IMR-90 (cell line): ENCODE measurements at regions of chr14 and their contacts with region 1.

Region 1: GRCh38 chr14:43166163-43166562 is 1340.9 kb downstream of the FSCB start:
- DNase-seq: no peak
- ATAC-seq: no peak
- H3K4me3 ChIP-seq: no peak overlapping the region
- H3K27ac ChIP-seq: no peak overlapping the region
- H3K4me1 ChIP-seq: no peaks in the 10 kb centered on the region
- H3K27me3 ChIP-seq: no peaks in the 10 kb centered on the region
- CTCF ChIP-seq: no peak
- POLR2A ChIP-seq: no peak
- RAD21 ChIP-seq: no peak

Region 2: GRCh38 chr14:43135877-43136411 is 30.2 kb before region 1 on chr14:
- CTCF ChIA-PET with region 1: no interaction called
- POLR2A ChIA-PET with region 1: no interaction called
- dilution Hi-C with region 1: no loop called
- in situ Hi-C with region 1: no loop called
- intact Hi-C with region 1: no loop called
- DNase-seq: no peak
- ATAC-seq: no peak
- H3K4me3 ChIP-seq: no peak overlapping the region
- H3K27ac ChIP-seq: no peak overlapping the region
- H3K4me1 ChIP-seq: no peaks in the 10 kb centered on the region
- H3K27me3 ChIP-seq: no peaks in the 10 kb centered on the region
- CTCF ChIP-seq: no peak
- POLR2A ChIP-seq: no peak
- RAD21 ChIP-seq: no peak

Region 3: GRCh38 chr14:43147485-43147884 is 18.7 kb before region 1 on chr14:
- CTCF ChIA-PET with region 1: no interaction called
- POLR2A ChIA-PET with region 1: no interaction called
- dilution Hi-C with region 1: no loop called
- in situ Hi-C with region 1: no loop called
- intact Hi-C with region 1: no loop called
- DNase-seq: peak; percentile 21
- ATAC-seq: no peak
- H3K4me3 ChIP-seq: no peak overlapping the region
- H3K27ac ChIP-seq: no peak overlapping the region
- H3K4me1 ChIP-seq: no peaks in the 10 kb centered on the region
- H3K27me3 ChIP-seq: no peaks in the 10 kb centered on the region
- CTCF ChIP-seq: no peak
- POLR2A ChIP-seq: no peak
- RAD21 ChIP-seq: no peak

Region 4: GRCh38 chr14:43735924-43736323 is 569.8 kb after region 1 on chr14:
- CTCF ChIA-PET with region 1: no interaction called
- POLR2A ChIA-PET with region 1: no interaction called
- dilution Hi-C with region 1: no loop called
- in situ Hi-C with region 1: no loop called
- intact Hi-C with region 1: loop called (anchors 5 kb)
- DNase-seq: no peak
- ATAC-seq: no peak
- H3K4me3 ChIP-seq: no peak overlapping the region
- H3K27ac ChIP-seq: no peak overlapping the region
- H3K4me1 ChIP-seq: no peaks in the 10 kb centered on the region
- H3K27me3 ChIP-seq: no peaks in the 10 kb centered on the region
- CTCF ChIP-seq: no peak
- POLR2A ChIP-seq: no peak
- RAD21 ChIP-seq: no peak